Pancreas (tissue), 10 donors: ENCODE measurements at regions of chr12 and their contacts with region 1.

Region 1: GRCh38 chr12:8681041-8681902 is 16.5 kb upstream of the RIMKLB start:
- DNase-seq: no peak
- ATAC-seq: peak; percentile 51 to 68 (median 59)
- H3K4me3 ChIP-seq: no peak overlapping the region
- H3K27ac ChIP-seq: no peak overlapping the region
- H3K4me1 ChIP-seq: peaks cover 0 to 4% (median 0%) of the 10 kb centered on the region in 3 donors
- H3K27me3 ChIP-seq: no peaks in the 10 kb centered on the region
- CTCF ChIP-seq: no peak

Region 2: DNA sequence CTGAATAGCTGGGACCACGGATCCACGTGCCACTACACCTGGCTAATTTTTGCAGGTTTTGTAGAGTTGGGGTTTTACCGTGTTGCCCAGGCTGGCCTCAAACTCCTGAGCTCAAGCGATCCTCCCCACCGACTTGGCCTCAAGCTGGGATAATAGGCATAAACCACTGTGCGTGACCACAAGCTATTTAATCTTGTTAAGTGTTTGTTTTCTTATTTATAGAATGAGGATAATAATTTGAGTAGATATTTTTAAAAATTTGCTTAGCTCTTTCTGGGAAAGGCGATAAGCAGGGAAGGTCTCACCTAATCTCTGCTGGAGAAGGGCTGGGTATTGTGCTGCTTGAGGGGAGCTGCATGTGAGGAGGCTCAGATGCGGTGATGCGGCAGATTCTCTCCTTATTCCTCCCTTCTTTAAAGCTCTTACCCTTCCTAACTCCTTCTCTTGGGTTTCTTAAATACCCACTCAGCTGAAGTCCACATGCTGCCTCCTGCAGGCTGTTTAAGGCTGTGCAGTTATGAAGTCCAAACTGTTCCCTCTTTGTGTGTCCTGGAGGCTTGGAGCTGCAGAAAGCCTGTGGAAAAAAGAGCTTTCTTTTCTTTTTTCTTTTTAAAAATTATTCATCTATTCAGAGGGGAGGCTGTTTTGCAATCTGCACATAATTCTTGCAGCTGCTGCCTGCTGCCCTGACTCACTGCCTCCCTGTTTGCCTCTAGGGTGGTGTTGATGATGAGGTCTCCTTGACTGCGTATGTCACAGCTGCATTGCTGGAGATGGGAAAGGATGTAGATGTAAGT is 179.1 kb after region 1 on chr12:
- intact Hi-C with region 1: loop called in 1 of 3 experiments (anchors 5 kb)
- DNase-seq: peak in 2 of 6 donors; percentile 26
- ATAC-seq: peak in 3 of 4 donors; percentile 68 to 84 (median 71)
- H3K4me3 ChIP-seq: no peak overlapping the region
- H3K27ac ChIP-seq: no peak overlapping the region
- H3K4me1 ChIP-seq: no peaks in the 10 kb centered on the region
- H3K27me3 ChIP-seq: no peaks in the 10 kb centered on the region
- CTCF ChIP-seq: peak; percentile 18 to 48 (median 37)